Activated CD4-positive, alpha-beta memory T cell treated with anti-CD3 and anti-CD28 coated beads for 36 hours (primary cell): ENCODE measurements at regions of chr12 and their contacts with region 1.

Region 1: DNA sequence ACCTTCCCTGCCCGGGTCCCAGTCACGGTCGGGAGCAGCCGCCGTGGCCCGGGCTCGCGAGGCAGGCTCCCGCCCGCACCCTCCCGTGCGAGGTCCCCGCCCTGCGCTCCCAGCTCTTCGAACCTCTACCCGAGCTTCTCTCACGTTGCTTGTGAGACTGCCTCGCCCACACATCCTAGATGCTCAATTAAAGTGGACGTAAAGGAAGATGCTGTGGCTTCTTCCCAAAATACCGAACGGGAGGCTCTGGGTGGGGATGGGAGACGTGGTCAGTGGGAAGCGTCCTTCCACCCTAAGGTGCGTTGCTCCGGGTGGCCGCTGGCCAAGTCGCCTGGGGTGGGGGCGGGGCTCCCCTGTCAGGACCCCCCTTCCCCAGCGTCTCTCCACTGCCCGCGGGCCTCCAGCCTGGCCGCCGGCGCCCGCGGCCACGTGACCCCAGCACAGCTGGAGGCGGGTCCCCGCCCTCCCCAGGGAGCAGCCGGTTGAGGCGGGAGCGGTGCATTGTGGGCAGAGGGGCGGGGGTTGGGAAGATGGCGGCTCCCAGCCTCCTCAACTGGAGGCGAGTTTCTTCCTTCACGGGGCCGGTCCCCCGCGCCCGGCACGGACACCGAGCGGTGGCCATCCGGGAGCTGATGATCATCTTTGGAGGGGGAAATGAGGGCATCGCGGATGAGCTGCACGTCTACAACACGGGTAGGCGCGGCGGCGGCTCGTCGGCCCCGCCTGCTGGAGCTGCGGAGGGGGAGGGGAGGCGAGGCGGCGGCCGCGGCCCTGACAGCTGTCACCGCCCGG is at the start of gene HCFC2:
- DNase-seq: peak; percentile 93
- H3K4me3 Mint-ChIP-seq: peak within 1 kb of the TSS; percentile 97
- H3K27ac Mint-ChIP-seq: peak within 1 kb of the TSS; percentile 81
- H3K4me1 Mint-ChIP-seq: peaks cover 21% of the 10 kb centered on the region
- H3K27me3 Mint-ChIP-seq: peaks cover 12% of the 10 kb centered on the region
- total RNA-seq, gene HCFC2: 8.9 to 10.8 TPM

Region 2: GRCh38 chr12:103884316-103884715 is 179.9 kb before region 1 on chr12:
- CTCF ChIA-PET with region 1: no interaction called
- POLR2A ChIA-PET with region 1: no interaction called
- intact Hi-C with region 1: loop called (anchors 2 kb)
- DNase-seq: peak; percentile 57
- H3K4me3 Mint-ChIP-seq: no peak overlapping the region
- H3K27ac Mint-ChIP-seq: no peak overlapping the region
- H3K4me1 Mint-ChIP-seq: peaks cover 16% of the 10 kb centered on the region
- H3K27me3 Mint-ChIP-seq: no peaks in the 10 kb centered on the region

Region 3: GRCh38 chr12:103956516-103957027 is 107.7 kb before region 1 on chr12:
- CTCF ChIA-PET with region 1: no interaction called
- POLR2A ChIA-PET with region 1: interaction called, 4 read pairs
- intact Hi-C with region 1: loop called (anchors 2 kb)
- DNase-seq: no peak
- H3K4me3 Mint-ChIP-seq: peak overlapping the region; percentile 97
- H3K27ac Mint-ChIP-seq: peak overlapping the region; percentile 94
- H3K4me1 Mint-ChIP-seq: peaks cover 38% of the 10 kb centered on the region
- H3K27me3 Mint-ChIP-seq: no peaks in the 10 kb centered on the region

Region 4: DNA sequence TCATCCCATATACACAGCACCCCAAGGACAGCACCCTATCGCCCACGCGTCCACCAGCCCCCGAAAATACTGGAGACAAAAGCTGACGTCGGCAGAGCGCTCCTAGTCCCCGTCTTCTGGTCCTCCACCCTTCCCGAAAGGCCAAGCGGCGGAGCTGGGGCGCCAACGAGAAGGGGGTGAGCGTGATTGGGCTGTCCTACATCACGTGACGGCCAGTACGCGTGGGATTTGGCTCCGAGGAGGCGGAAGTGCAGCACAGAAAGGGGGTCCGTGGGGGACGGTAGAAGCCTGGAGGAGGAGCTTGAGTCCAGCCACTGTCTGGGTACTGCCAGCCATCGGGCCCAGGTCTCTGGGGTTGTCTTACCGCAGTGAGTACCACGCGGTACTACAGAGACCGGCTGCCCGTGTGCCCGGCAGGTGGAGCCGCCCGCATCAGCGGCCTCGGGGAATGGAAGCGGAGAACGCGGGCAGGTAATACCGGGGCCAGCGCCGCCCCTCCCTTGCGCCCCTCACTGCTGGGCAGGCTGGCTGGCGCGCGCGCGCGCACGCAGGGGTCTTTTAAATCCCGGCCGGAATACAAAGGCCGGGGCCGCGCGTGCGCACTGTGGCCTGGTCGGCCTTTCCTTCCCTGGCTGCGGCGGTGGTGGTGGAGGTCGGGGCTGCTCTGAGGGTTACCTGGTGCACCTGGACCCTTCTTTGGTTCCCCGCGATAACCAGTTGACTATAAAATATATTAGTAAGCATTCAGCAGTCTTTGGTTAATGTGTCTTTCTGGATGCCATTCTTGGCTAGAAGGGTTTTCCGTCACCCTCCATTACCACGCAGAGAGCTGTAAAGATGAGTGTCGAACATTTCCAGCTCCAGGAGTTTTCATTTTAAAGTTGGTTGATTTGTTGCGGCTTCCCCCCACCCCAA is 98.4 kb before region 1 on chr12 and contains the start of gene TDG:
- CTCF ChIA-PET with region 1: no interaction called
- POLR2A ChIA-PET with region 1: interaction called, 11 read pairs
- intact Hi-C with region 1: loop called (anchors 1 kb)
- DNase-seq: peak; percentile 99
- H3K4me3 Mint-ChIP-seq: peak within 1 kb of the TSS; percentile 96
- H3K27ac Mint-ChIP-seq: peak within 1 kb of the TSS; percentile 96
- H3K4me1 Mint-ChIP-seq: peaks cover 53% of the 10 kb centered on the region
- H3K27me3 Mint-ChIP-seq: no peaks in the 10 kb centered on the region
- total RNA-seq, gene TDG: 29.1 to 29.7 TPM

Region 5: DNA sequence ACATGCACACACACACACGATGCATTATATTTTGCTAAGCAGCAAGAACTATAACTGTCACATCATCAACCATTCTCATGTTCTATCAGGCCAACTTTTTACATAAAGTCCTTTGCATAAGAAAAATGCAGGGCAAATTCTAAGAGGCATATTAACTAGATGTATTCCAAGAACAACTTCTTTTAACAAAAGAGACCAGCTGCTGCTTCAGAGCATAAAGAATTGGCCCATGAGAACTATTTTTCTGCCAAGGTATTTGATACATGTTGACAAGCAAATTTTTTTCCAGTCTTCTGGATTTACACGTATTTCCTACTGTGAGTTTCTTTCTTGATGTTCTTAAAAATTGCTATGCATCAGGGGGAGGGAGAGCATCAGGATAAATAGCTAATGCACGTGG is 41.4 kb before region 1 on chr12:
- CTCF ChIA-PET with region 1: no interaction called
- POLR2A ChIA-PET with region 1: no interaction called
- intact Hi-C with region 1: no loop called
- DNase-seq: no peak
- H3K4me3 Mint-ChIP-seq: no peak overlapping the region
- H3K27ac Mint-ChIP-seq: no peak overlapping the region
- H3K4me1 Mint-ChIP-seq: no peaks in the 10 kb centered on the region
- H3K27me3 Mint-ChIP-seq: peaks cover 20% of the 10 kb centered on the region

Region 6: GRCh38 chr12:104083769-104084475 is 19.7 kb after region 1 on chr12:
- CTCF ChIA-PET with region 1: interaction called, 5 read pairs
- POLR2A ChIA-PET with region 1: interaction called, 3 read pairs
- intact Hi-C with region 1: loop called (anchors 1 kb)
- DNase-seq: peak; percentile 78
- H3K4me3 Mint-ChIP-seq: no peak overlapping the region
- H3K27ac Mint-ChIP-seq: no peak overlapping the region
- H3K4me1 Mint-ChIP-seq: peaks cover 17% of the 10 kb centered on the region
- H3K27me3 Mint-ChIP-seq: no peaks in the 10 kb centered on the region

Region 7: GRCh38 chr12:104137913-104138796 is 73.9 kb after region 1 on chr12 and contains the start of gene NFYB:
- CTCF ChIA-PET with region 1: interaction called, 3 read pairs
- POLR2A ChIA-PET with region 1: interaction called, 21 read pairs
- intact Hi-C with region 1: loop called (anchors 1 kb)
- DNase-seq: peak; percentile 95
- H3K4me3 Mint-ChIP-seq: peak within 1 kb of the TSS; percentile 83
- H3K27ac Mint-ChIP-seq: peak within 1 kb of the TSS; percentile 84
- H3K4me1 Mint-ChIP-seq: peaks cover 13% of the 10 kb centered on the region
- H3K27me3 Mint-ChIP-seq: no peaks in the 10 kb centered on the region
- total RNA-seq, gene NFYB: 23.6 to 24.5 TPM

Region 8: GRCh38 chr12:104334581-104334980 is 270.4 kb after region 1 on chr12:
- CTCF ChIA-PET with region 1: no interaction called
- POLR2A ChIA-PET with region 1: no interaction called
- intact Hi-C with region 1: no loop called
- DNase-seq: no peak
- H3K4me3 Mint-ChIP-seq: no peak overlapping the region
- H3K27ac Mint-ChIP-seq: no peak overlapping the region
- H3K4me1 Mint-ChIP-seq: no peaks in the 10 kb centered on the region
- H3K27me3 Mint-ChIP-seq: no peaks in the 10 kb centered on the region

Region 9: GRCh38 chr12:104494137-104494792 is 430.0 kb after region 1 on chr12:
- CTCF ChIA-PET with region 1: no interaction called
- POLR2A ChIA-PET with region 1: no interaction called
- intact Hi-C with region 1: no loop called
- DNase-seq: peak; percentile 89
- H3K4me3 Mint-ChIP-seq: peak overlapping the region; percentile 62
- H3K27ac Mint-ChIP-seq: peak overlapping the region; percentile 89
- H3K4me1 Mint-ChIP-seq: peaks cover 88% of the 10 kb centered on the region
- H3K27me3 Mint-ChIP-seq: no peaks in the 10 kb centered on the region